ENCODE measurements at regions of chr6 and their contacts with region 1.

Region 1: DNA sequence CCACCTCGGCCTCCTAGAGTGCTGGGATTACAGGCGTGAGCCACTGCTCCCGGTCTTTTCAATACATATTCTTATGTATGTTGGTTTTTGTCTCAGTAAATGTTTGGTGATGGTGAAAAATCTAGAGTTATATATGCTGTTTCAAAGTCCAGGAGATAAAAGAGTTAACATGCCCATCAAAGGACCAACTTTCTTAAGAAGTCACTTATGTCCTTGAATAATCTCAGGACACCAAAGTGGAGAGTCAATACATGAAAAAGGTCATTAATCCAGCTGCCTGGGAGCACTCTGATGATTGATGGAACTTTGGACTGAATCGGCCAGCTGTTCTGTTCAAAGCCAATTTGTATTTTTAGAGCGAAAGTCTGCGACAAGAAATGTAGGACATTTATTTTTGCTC is 59.8 kb upstream of the HDAC2 start:
- DNase-seq: no peak
- ATAC-seq: no peak

Region 2: GRCh38 chr6:114055763-114056162 is 25.0 kb after region 1 on chr6:
- intact Hi-C with region 1: loop called (anchors 1 kb)
- DNase-seq: no peak
- ATAC-seq: no peak

Measured in sciatic nerve (tissue), 2 donors.